ENCODE measurements at regions of chr1 and their contacts with region 1.

Region 1: DNA sequence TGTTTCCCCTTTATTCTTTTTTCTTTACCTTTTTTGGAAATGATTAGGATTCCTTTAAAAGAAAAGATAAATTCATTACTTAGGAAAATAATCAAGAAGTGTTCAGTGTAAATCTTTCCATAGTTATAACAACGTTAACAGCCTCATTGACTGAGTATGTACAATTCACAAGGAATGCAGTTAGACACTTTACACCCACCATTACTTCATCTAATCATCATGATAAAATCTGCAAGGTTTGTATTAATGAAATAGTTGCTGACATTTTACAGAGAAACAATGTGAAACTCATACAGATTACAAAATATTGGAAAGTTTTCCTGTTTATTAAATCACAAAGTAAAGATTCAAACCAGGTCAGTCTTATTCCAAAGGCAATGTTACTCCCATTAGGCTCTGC is 59.3 kb upstream of the NEGR1 start:
- DNase-seq: no peak
- H3K4me3 Mint-ChIP-seq: no peak overlapping the region
- H3K27ac Mint-ChIP-seq: no peak overlapping the region
- H3K4me1 Mint-ChIP-seq: no peaks in the 10 kb centered on the region
- H3K27me3 Mint-ChIP-seq: no peaks in the 10 kb centered on the region
- CTCF ChIP-seq: no peak

Region 2: DNA sequence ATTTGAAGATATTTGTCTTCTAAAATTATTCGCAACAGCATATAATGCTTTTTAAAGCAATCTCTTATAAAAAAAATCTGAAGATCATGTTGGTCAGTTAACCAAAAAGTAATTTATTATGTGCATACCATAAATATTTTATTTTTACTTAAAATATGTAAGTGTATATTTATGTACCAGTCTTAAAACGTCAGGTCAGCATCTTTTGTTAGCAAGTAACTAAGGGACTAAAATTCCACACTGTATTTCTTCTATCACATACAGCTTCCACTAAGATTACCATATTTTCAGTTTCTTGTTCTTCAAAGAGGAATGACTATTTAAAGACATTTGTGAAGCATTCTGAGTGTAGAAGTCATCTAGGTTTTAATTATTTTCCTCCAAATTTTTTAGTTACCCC is 78.9 kb before region 1 on chr1:
- CTCF ChIA-PET with region 1: no interaction called
- POLR2A ChIA-PET with region 1: no interaction called
- intact Hi-C with region 1: no loop called
- DNase-seq: no peak
- H3K4me3 Mint-ChIP-seq: no peak overlapping the region
- H3K27ac Mint-ChIP-seq: no peak overlapping the region
- H3K4me1 Mint-ChIP-seq: no peaks in the 10 kb centered on the region
- H3K27me3 Mint-ChIP-seq: no peaks in the 10 kb centered on the region
- CTCF ChIP-seq: no peak

Region 3: DNA sequence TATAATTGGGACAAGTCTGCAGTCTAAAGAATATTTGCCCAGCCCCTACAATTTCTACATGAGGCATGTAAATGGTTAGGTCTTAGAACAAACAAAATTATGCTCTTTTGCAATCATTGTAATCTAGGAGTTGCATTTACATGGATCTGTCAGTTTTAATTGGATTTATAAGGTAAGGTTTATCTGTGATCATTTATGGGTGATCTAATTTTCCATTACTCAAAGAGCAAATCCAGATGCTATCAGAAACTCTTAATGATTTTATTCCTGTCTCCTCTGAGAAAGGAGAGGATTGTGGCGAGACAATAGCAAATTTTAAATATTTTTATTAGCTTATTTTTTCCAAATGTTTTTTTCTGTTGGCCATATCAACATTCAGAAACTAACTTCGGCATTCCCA is 45.2 kb before region 1 on chr1:
- CTCF ChIA-PET with region 1: no interaction called
- POLR2A ChIA-PET with region 1: interaction called, 10 read pairs
- intact Hi-C with region 1: no loop called
- DNase-seq: no peak
- H3K4me3 Mint-ChIP-seq: no peak overlapping the region
- H3K27ac Mint-ChIP-seq: no peak overlapping the region
- H3K4me1 Mint-ChIP-seq: no peaks in the 10 kb centered on the region
- H3K27me3 Mint-ChIP-seq: no peaks in the 10 kb centered on the region
- CTCF ChIP-seq: no peak

Region 4: GRCh38 chr1:72412286-72412685 is 70.6 kb after region 1 on chr1:
- CTCF ChIA-PET with region 1: no interaction called
- POLR2A ChIA-PET with region 1: no interaction called
- intact Hi-C with region 1: no loop called
- DNase-seq: no peak
- H3K4me3 Mint-ChIP-seq: no peak overlapping the region
- H3K27ac Mint-ChIP-seq: no peak overlapping the region
- H3K4me1 Mint-ChIP-seq: no peaks in the 10 kb centered on the region
- H3K27me3 Mint-ChIP-seq: no peaks in the 10 kb centered on the region
- CTCF ChIP-seq: no peak

Measured in MCF 10A (cell line).